Motor neuron (in vitro differentiated cells): ENCODE measurements at regions of chr5 and their contacts with region 1.

Region 1: GRCh38 chr5:1763548-1763911 is 36.1 kb downstream of the MRPL36 start:
- ATAC-seq: peak; percentile 72 to 98 (median 82)
- H3K4me3 ChIP-seq: no peak overlapping the region
- H3K27ac ChIP-seq: no peak overlapping the region
- H3K4me1 ChIP-seq: no peaks in the 10 kb centered on the region

Region 2: GRCh38 chr5:1431021-1431811 is 332.3 kb before region 1 on chr5:
- in situ Hi-C with region 1: no loop called
- ATAC-seq: no peak
- H3K4me3 ChIP-seq: no peak overlapping the region
- H3K27ac ChIP-seq: no peak overlapping the region
- H3K4me1 ChIP-seq: no peaks in the 10 kb centered on the region

Region 3: GRCh38 chr5:2038321-2039179 is 275.0 kb after region 1 on chr5:
- in situ Hi-C with region 1: loop called in 1 of 9 experiments (anchors 25 kb)
- ATAC-seq: peak; percentile 88 to 96 (median 91)
- H3K4me3 ChIP-seq: peak overlapping the region; percentile 20 to 52 (median 37)
- H3K27ac ChIP-seq: no peak overlapping the region
- H3K4me1 ChIP-seq: peaks cover 0 to 6% of the 10 kb centered on the region in 2 donors